Activated CD4-positive, alpha-beta T cell treated with anti-CD3 and anti-CD28 coated beads for 36 hours (primary cell): ENCODE measurements at regions of chr10 and their contacts with region 1.

Region 1: GRCh38 chr10:73246783-73247508 is at the start of gene DNAJC9:
- DNase-seq: peak; percentile 99
- ATAC-seq: peak; percentile 94
- H3K4me3 Mint-ChIP-seq: peak within 1 kb of the TSS; percentile 99
- H3K27ac Mint-ChIP-seq: peak within 1 kb of the TSS; percentile 97
- H3K4me1 Mint-ChIP-seq: peaks cover 58% of the 10 kb centered on the region
- H3K27me3 Mint-ChIP-seq: no peaks in the 10 kb centered on the region
- total RNA-seq, gene DNAJC9: 36.9 to 45.4 TPM

Region 2: GRCh38 chr10:72692057-72692910 is 554.7 kb before region 1 on chr10 and contains the start of gene MCU:
- CTCF ChIA-PET with region 1: no interaction called
- POLR2A ChIA-PET with region 1: no interaction called
- intact Hi-C with region 1: loop called in 1 of 2 experiments (anchors 2 kb)
- DNase-seq: peak; percentile 96
- ATAC-seq: peak; percentile 98
- H3K4me3 Mint-ChIP-seq: peak within 1 kb of the TSS; percentile 77
- H3K27ac Mint-ChIP-seq: peak within 1 kb of the TSS; percentile 75
- H3K4me1 Mint-ChIP-seq: peaks cover 40% of the 10 kb centered on the region
- H3K27me3 Mint-ChIP-seq: no peaks in the 10 kb centered on the region
- total RNA-seq, gene MCU: 15.1 to 16.0 TPM

Region 3: GRCh38 chr10:73281097-73281496 is 34.2 kb after region 1 on chr10:
- CTCF ChIA-PET with region 1: interaction called, 3 read pairs
- POLR2A ChIA-PET with region 1: interaction called, 13 read pairs
- intact Hi-C with region 1: no loop called
- DNase-seq: no peak
- ATAC-seq: no peak
- H3K4me3 Mint-ChIP-seq: no peak overlapping the region
- H3K27ac Mint-ChIP-seq: no peak overlapping the region
- H3K4me1 Mint-ChIP-seq: no peaks in the 10 kb centered on the region
- H3K27me3 Mint-ChIP-seq: no peaks in the 10 kb centered on the region

Region 4: GRCh38 chr10:73495884-73496674 is 249.1 kb after region 1 on chr10 and contains the start of gene PPP3CB:
- CTCF ChIA-PET with region 1: no interaction called
- POLR2A ChIA-PET with region 1: interaction called, 7 read pairs
- intact Hi-C with region 1: loop called (anchors 1 to 2 kb)
- DNase-seq: peak; percentile 96
- ATAC-seq: peak; percentile 81
- H3K4me3 Mint-ChIP-seq: peak within 1 kb of the TSS; percentile 91
- H3K27ac Mint-ChIP-seq: peak within 1 kb of the TSS; percentile 99
- H3K4me1 Mint-ChIP-seq: peaks cover 45% of the 10 kb centered on the region
- H3K27me3 Mint-ChIP-seq: no peaks in the 10 kb centered on the region
- total RNA-seq, gene PPP3CB: 42.3 to 45.3 TPM

Region 5: DNA sequence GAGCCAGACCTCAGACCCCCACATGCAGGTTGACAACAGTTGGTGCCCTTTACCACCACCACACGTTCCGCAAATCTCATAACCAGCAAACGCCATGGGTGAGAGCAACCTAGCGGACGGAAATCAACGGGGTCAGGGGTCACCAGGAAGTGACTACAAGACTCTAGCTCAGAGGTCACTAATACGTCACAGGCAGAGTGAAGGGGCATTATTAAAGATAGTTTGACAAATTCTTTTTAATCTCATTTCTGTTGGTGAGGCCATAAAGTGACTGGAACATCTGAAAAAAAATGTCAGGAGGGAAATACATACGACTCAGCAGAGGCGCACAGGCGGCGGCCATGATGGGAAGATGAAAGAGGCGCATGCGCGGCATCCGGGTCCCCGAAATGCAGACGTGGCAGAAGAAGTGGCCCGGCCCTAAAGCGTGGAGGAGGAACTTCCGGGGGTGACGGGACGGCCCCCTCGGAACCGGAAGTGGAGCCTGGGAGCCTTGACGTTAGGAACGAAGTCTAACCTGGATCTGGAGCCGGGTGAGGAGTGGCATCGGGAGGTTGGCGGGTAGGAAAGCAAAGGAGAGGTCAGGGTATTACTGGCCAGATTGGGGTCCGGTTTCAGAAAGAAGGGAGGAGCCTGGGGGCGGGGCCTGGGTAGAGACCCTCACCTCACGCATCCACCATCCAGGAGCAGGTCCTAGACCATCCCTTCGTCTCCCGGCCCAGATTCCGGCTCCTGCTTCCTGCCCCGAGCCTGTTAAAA is 497.1 kb after region 1 on chr10 and contains the start of gene SEC24C:
- CTCF ChIA-PET with region 1: no interaction called
- POLR2A ChIA-PET with region 1: no interaction called
- intact Hi-C with region 1: loop called in 1 of 2 experiments (anchors 1 kb)
- DNase-seq: peak; percentile 98
- ATAC-seq: peak; percentile 87
- H3K4me3 Mint-ChIP-seq: peak within 1 kb of the TSS; percentile 95
- H3K27ac Mint-ChIP-seq: peak within 1 kb of the TSS; percentile 100
- H3K4me1 Mint-ChIP-seq: peaks cover 42% of the 10 kb centered on the region
- H3K27me3 Mint-ChIP-seq: no peaks in the 10 kb centered on the region
- total RNA-seq, gene SEC24C: 84.6 to 88.2 TPM

Region 6: DNA sequence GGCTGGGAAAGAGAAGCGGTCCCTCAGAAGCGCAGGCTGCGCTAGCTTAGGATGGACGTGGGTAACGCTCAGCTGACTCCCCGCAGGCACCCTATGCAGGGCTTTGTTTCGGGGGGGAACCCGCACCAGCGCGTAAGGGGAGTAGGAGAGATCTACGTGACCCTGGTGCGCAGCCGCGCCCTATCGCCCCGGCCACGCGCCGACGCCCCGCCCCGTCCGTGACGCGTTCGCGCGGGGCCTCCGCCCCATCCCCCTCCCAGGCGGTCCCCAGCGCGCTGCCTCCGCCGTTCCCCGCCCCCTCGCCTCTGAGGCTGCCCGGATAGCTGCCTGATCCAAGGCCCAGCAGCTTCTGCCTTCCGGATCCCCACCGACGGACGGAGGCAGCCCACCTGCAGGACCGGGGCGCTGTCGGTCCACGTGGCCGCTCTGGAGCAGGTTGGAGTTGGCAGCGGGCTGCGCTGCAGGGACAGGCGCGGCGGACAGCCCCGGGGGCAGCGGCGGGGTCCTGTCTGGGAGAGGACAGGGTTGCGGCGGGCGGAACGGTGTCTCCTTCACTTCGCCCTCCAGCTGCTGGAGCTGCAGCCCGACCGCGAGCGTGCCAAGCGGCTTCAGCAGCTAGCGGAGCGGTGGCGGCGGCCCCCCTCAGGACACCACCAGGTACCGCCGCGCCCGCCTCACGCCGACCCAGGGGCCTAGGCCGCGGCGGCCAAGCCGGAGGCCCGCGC is 1963.5 kb after region 1 on chr10 and contains the start of gene VDAC2:
- CTCF ChIA-PET with region 1: no interaction called
- POLR2A ChIA-PET with region 1: no interaction called
- intact Hi-C with region 1: loop called in 1 of 2 experiments (anchors 5 kb)
- DNase-seq: peak; percentile 96
- ATAC-seq: peak; percentile 83
- H3K4me3 Mint-ChIP-seq: peak within 1 kb of the TSS; percentile 89
- H3K27ac Mint-ChIP-seq: peak within 1 kb of the TSS; percentile 100
- H3K4me1 Mint-ChIP-seq: peaks cover 40% of the 10 kb centered on the region
- H3K27me3 Mint-ChIP-seq: no peaks in the 10 kb centered on the region
- total RNA-seq, gene VDAC2: 122 to 233 TPM